Naive thymus-derived CD8-positive, alpha-beta T cell (primary cell): ENCODE measurements at regions of chr22 and their contacts with region 1.

Region 1: GRCh38 chr22:25060522-25061071 is 108.1 kb downstream of the KIAA1671 start:
- DNase-seq: peak in 4 of 10 donors; percentile 32 to 51 (median 40)
- ATAC-seq: no peak
- H3K4me3 Mint-ChIP-seq: peak overlapping the region in 7 of 10 donors; percentile 0 to 84 (median 55)
- H3K27ac Mint-ChIP-seq: peak overlapping the region; percentile 18 to 100 (median 94)
- H3K4me1 Mint-ChIP-seq: peaks cover 25 to 62% (median 58%) of the 10 kb centered on the region in 4 donors
- H3K27me3 Mint-ChIP-seq: peaks cover 0 to 4% (median 0%) of the 10 kb centered on the region in 5 donors

Region 2: GRCh38 chr22:25076336-25076735 is 15.7 kb after region 1 on chr22:
- POLR2A ChIA-PET with region 1: interaction called, 19 read pairs
- DNase-seq: peak in 3 of 10 donors; percentile 28 to 51 (median 39)
- ATAC-seq: peak; percentile 67 to 77
- H3K4me3 Mint-ChIP-seq: peak overlapping the region; percentile 36 to 77 (median 66)
- H3K27ac Mint-ChIP-seq: peak overlapping the region; percentile 75 to 93 (median 90)
- H3K4me1 Mint-ChIP-seq: peaks cover 24 to 78% (median 69%) of the 10 kb centered on the region in 4 donors
- H3K27me3 Mint-ChIP-seq: no peaks in the 10 kb centered on the region

Region 3: DNA sequence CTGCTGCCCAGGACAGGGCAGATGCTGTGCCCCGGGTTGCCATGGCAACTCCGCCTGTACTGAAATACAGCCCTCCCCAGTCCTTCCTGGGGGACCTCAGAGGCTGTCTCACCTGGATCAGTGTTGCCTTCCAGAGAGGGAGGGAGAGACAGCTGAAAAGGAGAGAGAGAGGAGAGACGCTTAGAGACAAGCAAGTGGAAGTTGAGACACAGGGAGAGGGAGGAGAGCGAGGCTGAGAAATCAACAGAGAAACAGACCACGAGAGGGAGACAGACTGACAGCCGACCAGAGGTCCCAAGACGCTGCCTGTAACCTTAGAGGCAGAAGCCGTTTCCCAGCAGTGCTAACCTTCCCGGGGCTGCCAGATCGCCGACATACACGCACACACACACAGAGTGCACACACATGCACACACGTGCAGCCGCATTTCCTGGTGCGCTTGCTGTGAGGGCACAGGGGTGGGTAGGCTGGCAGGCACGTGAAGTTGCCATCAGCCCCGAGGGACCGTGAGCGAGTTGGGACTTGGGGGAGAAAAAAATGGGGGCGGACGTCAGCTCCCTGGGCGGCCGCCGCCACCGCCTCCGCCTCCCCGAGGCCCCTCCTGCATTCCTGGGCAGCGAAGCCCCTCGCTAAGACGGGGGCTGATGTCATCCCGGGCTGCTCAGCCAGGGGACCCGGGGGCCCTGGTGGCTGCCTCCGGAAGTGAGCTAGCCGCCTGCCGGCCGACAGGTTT is 50.4 kb after region 1 on chr22:
- POLR2A ChIA-PET with region 1: interaction called, 13 read pairs
- DNase-seq: peak; percentile 30 to 77 (median 58)
- ATAC-seq: peak; percentile 85 to 87
- H3K4me3 Mint-ChIP-seq: peak overlapping the region; percentile 82 to 97 (median 90)
- H3K27ac Mint-ChIP-seq: peak overlapping the region; percentile 85 to 97 (median 90)
- H3K4me1 Mint-ChIP-seq: peaks cover 14 to 42% (median 26%) of the 10 kb centered on the region in 4 donors
- H3K27me3 Mint-ChIP-seq: peaks cover 0 to 5% (median 0%) of the 10 kb centered on the region in 5 donors